Left ventricle myocardium inferior (tissue), 1 donor: ENCODE measurements at regions of chr7 and their contacts with region 1.

Region 1: DNA sequence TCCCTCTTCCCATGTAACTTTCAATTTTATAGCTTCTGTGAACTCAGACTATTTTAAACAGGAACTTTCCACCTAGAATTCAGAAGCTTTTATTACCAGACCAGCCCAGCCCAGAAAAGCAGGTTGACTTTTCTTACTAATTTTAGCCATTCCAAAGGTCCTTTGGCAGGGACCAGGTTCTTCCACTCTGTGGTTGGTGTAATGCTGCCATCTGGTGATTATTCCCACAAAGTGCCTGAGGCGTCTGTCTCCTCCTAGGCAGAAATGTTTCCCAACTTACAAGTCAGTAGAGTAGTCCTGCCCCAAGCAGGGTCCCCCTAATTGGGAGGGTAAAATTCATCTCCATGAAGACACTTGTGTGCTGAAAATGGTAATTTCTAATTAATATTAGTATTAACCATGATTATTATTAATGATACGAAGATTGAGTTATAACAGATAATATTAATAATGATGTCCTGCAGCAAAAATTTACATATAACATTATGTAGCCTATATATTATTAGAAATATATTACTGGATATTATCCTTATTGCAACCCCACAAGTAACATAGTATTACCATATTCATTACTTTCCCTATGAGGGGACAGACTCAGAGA is 53.0 kb upstream of the PPP1R17 start:
- DNase-seq: no peak
- H3K4me3 ChIP-seq: no peak overlapping the region
- H3K27ac ChIP-seq: no peak overlapping the region
- H3K4me1 ChIP-seq: peaks cover 5% of the 10 kb centered on the region
- H3K27me3 ChIP-seq: no peaks in the 10 kb centered on the region
- CTCF ChIP-seq: peak; percentile 76

Region 2: GRCh38 chr7:31192986-31193385 is 441.0 kb before region 1 on chr7:
- intact Hi-C with region 1: loop called (anchors 10 kb)
- DNase-seq: peak; percentile 53
- H3K4me3 ChIP-seq: peak overlapping the region; percentile 25
- H3K27ac ChIP-seq: no peak overlapping the region
- H3K4me1 ChIP-seq: no peaks in the 10 kb centered on the region
- H3K27me3 ChIP-seq: peaks cover 60% of the 10 kb centered on the region
- CTCF ChIP-seq: peak; percentile 80

Region 3: GRCh38 chr7:31550432-31550831 is 83.6 kb before region 1 on chr7:
- intact Hi-C with region 1: no loop called
- DNase-seq: no peak
- H3K4me3 ChIP-seq: no peak overlapping the region
- H3K27ac ChIP-seq: no peak overlapping the region
- H3K4me1 ChIP-seq: no peaks in the 10 kb centered on the region
- H3K27me3 ChIP-seq: no peaks in the 10 kb centered on the region
- CTCF ChIP-seq: no peak